ENCODE measurements at regions of chr7 and their contacts with region 1.

Region 1: DNA sequence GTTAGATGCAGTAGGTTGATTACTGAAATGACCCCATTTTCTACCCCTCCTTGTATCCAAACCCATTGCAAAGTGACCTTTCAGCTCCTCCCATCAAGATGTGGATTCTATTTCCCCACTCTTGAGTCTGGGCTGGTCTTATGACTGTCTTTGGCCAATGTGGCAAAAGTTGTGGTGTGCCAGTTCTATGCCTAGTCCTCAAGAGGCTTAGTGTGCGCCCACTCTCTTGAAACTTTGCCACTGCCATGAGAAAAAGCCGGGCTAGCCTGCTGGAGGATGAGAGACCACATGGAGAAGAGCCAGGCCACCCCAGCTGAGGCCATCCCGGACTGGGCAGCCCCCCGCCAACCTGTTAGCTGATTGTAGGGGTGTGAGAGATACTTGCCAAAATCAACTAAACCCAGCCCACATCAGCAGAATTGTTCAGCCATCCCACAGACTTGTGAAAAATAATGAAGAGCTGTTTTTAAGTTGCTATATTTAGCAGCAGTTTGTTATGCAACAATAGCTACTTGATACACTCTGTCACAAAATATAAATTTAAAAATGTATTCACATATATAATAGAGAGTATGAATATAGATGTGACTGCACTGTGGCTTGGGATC is 131.0 kb upstream of the PALS2 start:
- DNase-seq: no peak
- ATAC-seq: no peak
- H3K4me3 Mint-ChIP-seq: peak overlapping the region; percentile 25
- H3K27ac Mint-ChIP-seq: no peak overlapping the region
- H3K4me1 Mint-ChIP-seq: peaks cover 23% of the 10 kb centered on the region
- H3K27me3 Mint-ChIP-seq: peaks cover 2% of the 10 kb centered on the region
- CTCF ChIP-seq: no peak

Region 2: DNA sequence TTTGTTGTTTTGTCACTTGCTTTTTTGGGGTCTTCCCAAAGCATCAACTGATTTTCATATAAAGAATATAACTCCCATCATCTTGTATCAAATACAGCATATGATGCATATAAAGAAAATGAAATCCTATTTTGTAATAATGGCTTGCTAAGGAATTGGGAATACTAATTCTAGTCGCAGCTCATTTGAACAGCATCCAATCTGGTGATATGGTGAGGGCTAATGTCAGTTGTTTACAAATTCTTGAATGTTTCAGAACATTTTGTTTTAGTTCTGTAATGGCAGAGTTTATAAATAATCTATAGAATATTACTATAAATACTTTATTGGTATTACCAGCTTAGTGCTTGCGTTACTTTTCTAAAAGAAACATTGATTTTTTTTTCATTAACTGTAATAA is 139.9 kb after region 1 on chr7:
- CTCF ChIA-PET with region 1: no interaction called
- POLR2A ChIA-PET with region 1: interaction called, 10 read pairs
- intact Hi-C with region 1: no loop called
- DNase-seq: no peak
- ATAC-seq: no peak
- H3K4me3 Mint-ChIP-seq: no peak overlapping the region
- H3K27ac Mint-ChIP-seq: no peak overlapping the region
- H3K4me1 Mint-ChIP-seq: peaks cover 27% of the 10 kb centered on the region
- H3K27me3 Mint-ChIP-seq: no peaks in the 10 kb centered on the region
- CTCF ChIP-seq: no peak